Mammary epithelial cell (primary cell): ENCODE measurements at regions of chr6 and their contacts with region 1.

Region 1: DNA sequence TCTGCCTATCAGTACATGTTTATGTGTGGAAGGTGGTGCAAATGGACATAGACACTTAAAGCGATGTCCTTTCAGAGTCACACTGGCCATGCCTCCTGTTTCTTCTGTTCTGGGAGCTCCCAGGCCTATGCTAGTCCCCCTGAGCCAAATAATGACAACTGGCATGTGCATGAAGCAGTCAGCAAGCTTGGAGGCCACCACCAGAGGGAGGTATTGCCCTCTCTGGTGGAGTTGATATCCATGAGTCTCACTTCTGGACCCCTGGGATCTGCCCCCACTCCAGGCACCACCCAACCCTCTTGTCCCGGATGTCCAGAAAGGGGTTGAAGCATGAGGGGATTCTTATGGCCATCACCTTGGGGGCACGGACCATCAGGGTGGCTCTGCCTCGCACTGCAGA is 172.2 kb downstream of the AIG1 start:
- DNase-seq: peak; percentile 20
- H3K4me3 ChIP-seq: no peak overlapping the region
- H3K27ac ChIP-seq: no peak overlapping the region
- H3K4me1 ChIP-seq: peaks cover 7% of the 10 kb centered on the region
- H3K27me3 ChIP-seq: no peaks in the 10 kb centered on the region
- CTCF ChIP-seq: peak; percentile 70 to 91

Region 2: GRCh38 chr6:143286251-143286795 is 53.5 kb after region 1 on chr6:
- CTCF ChIA-PET with region 1: no interaction called
- dilution Hi-C with region 1: no loop called
- in situ Hi-C with region 1: no loop called
- intact Hi-C with region 1: loop called (anchors 5 kb)
- DNase-seq: peak; percentile 90
- H3K4me3 ChIP-seq: no peak overlapping the region
- H3K27ac ChIP-seq: peak overlapping the region; percentile 75
- H3K4me1 ChIP-seq: peaks cover 26% of the 10 kb centered on the region
- H3K27me3 ChIP-seq: no peaks in the 10 kb centered on the region
- CTCF ChIP-seq: no peak

Region 3: GRCh38 chr6:143299253-143300166 is 66.7 kb after region 1 on chr6:
- CTCF ChIA-PET with region 1: no interaction called
- dilution Hi-C with region 1: no loop called
- in situ Hi-C with region 1: no loop called
- intact Hi-C with region 1: no loop called
- DNase-seq: no peak
- H3K4me3 ChIP-seq: no peak overlapping the region
- H3K27ac ChIP-seq: no peak overlapping the region
- H3K4me1 ChIP-seq: no peaks in the 10 kb centered on the region
- H3K27me3 ChIP-seq: no peaks in the 10 kb centered on the region
- CTCF ChIP-seq: no peak

Region 4: DNA sequence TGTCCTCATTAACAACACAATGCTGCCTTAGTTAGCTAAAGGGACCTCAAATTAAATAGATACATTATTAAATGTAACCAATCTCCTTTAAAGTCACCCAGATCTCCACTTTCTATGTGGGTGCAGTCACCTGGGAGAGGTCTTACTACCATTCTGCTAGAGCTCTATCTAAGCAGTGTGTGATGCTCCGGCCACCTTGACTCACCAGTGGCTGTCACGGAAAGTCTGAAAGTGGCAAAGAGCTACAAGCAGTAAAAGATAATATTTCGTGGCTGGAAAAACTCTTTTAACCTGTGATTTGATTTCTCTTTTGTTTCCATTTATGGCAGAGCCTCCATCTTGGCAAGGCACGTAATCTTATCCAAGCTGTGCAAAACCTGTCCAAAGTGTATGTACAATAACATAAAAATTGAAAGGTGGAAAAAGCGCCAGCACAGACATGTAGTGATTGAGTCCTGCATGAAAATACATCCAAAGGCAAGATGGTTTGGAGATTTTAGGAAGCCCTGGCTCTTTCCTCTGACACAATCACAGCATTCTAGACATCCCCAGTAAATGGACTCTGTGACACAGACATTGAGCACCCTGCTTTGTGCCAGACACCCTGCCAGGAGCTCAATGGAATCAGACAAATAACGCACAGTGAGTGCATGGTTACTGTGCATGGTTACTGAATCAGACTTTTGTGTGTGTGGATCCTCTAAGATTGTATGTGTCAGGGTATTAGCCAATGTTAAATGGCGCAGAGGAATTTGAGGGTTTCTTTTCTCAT is 101.1 kb after region 1 on chr6:
- CTCF ChIA-PET with region 1: no interaction called
- dilution Hi-C with region 1: no loop called
- in situ Hi-C with region 1: no loop called
- intact Hi-C with region 1: loop called (anchors 5 kb)
- DNase-seq: peak; percentile 52
- H3K4me3 ChIP-seq: peak overlapping the region in 2 of 3 experiments; percentile 9 to 21
- H3K27ac ChIP-seq: peak overlapping the region; percentile 98
- H3K4me1 ChIP-seq: peaks cover 73% of the 10 kb centered on the region
- H3K27me3 ChIP-seq: no peaks in the 10 kb centered on the region
- CTCF ChIP-seq: no peak